ENCODE measurements at regions of chr15 and their contacts with region 1.

Region 1: DNA sequence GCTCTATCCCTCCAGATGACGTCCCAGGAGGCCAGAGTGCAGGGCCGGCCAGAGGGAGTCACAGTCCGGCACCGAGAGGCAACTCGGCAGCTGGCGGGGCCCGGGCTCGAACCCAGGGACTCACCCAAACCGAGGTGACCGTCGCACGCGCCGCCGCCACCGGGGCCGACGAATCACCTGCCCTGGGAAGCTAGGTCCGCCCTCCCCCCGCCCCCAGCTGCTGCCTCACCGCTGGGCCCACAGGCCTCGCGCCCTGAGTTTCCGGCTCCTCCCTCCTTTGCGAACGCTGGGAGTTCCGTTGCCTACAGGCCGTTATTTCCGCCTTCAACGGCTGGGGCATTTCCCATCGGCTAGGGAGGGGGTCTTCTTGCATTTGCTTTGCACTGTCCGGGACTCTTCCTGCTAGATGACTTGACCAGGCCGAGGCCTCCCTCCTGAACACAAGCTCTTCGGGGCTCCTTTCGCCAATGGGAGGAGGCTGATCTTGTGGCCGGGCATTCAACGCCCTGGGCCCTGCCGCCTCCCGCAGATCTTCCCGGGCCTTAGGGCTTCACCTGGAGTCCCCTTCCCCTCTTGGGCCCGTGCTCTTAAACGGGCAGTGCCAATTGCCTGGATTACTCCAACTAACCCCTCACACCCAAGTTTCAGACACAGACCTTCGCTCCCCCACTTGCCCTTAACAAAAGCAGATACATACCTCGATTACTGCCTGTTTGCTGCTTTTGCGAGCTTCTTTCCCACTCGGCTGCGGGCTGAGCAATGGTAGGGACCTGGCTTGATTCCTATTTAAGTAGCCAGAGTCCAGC is at the start of gene SNUPN:
- DNase-seq: peak; percentile 78
- ATAC-seq: peak; percentile 93
- H3K4me3 Mint-ChIP-seq: peak within 1 kb of the TSS; percentile 96
- H3K27ac Mint-ChIP-seq: peak within 1 kb of the TSS; percentile 98
- H3K4me1 Mint-ChIP-seq: peaks cover 19% of the 10 kb centered on the region
- H3K27me3 Mint-ChIP-seq: no peaks in the 10 kb centered on the region
- CTCF ChIP-seq: no peak
- total RNA-seq, gene SNUPN: 20.5 and 20.8 TPM in 2 replicates

Region 2: DNA sequence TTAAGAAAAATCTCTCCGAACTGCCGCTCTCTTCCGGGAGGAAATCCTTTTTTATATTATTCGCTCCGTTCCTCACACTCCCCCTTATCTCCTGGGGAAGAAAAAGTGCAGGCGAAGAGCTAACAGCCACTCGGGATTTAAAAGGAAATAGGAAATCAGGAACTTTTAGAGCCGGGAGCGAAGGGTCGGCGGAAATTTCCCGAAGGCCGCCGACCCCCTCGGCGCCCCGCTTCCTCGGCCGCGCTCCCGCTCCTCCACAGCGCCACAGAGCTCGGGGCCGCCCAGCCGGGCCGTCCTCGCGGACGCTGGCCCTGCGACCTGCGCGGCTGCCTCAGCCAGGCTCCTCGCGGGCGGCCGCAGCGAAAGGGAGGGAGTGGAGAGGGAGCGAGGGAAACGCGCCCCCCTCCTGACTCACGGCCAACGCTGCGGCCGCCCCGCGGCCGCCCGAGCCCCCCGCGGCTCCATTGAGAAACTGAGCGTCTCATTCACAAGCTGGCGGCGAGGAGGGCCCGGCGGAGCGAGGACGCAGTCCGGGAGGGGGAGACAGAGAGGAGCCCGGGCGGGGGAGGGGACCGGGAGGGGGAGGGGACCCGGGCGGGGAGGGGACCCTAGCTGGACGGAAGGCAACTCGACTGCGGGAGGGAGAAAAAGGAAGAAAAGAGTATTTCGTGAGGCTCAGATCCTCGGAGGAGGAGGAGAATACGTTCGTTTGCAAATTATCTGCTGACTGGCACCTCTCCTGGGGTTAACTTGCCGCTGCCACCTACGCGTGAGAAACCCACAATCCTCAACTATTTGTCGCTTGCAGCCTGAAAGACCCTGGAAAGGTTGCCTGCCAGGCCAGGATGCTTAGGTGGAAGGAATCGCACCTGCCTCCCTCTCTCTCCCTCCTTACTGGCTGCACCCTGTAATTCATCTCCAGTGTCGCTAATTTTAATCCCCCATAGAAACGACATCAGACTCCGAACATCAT is 46.5 kb before region 1 on chr15 and contains the start of gene PTPN9:
- CTCF ChIA-PET with region 1: no interaction called
- POLR2A ChIA-PET with region 1: interaction called, 10 read pairs
- intact Hi-C with region 1: loop called (anchors 1 kb)
- DNase-seq: peak; percentile 63
- ATAC-seq: peak; percentile 87
- H3K4me3 Mint-ChIP-seq: peak within 1 kb of the TSS; percentile 92
- H3K27ac Mint-ChIP-seq: peak within 1 kb of the TSS; percentile 82
- H3K4me1 Mint-ChIP-seq: peaks cover 19% of the 10 kb centered on the region
- H3K27me3 Mint-ChIP-seq: no peaks in the 10 kb centered on the region
- CTCF ChIP-seq: no peak
- total RNA-seq, gene PTPN9: 18.2 and 19.2 TPM in 2 replicates

Region 3: DNA sequence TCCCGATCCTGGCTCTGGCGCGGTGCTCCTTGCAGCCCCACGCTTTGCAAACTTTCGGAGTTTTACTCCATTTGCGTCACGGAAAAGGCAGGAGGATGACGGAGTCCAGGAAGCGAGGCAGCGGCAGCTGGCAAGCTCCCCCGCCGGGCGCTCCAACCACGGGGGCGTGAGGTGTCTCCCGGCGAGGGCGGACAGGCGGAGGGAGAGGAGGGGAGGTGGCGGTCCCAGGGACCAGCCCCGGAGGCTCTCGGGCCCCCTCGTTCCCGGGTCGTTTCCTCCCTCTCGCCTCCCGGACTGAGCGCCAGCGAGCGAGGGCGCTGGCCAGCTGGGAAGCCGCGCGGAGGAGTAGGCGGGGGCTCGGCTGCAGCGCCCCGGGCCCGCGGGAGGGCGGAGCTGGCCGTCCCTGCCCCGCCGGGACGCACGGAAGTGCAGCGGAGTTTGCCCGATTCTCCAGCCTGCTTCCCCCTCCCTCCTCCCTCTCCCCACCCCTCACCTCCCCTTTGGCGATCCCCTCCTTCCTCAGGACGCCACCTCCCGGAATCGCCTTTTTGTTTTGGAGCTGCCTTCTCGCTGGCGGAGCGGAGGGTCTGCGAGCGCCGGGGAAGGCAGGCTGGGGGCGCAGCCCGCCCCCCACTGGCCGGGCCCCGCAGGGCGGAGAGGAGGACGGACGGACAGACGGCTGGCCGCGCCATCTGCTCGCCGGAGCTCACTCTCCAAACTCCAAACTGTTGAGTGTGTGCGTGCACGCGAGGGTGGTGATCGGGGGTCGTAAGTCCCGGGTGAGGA is 21.8 kb after region 1 on chr15 and contains the start of gene SNX33:
- CTCF ChIA-PET with region 1: interaction called, 3 read pairs
- POLR2A ChIA-PET with region 1: interaction called, 164 read pairs
- intact Hi-C with region 1: no loop called
- DNase-seq: peak; percentile 46
- ATAC-seq: peak; percentile 70
- H3K4me3 Mint-ChIP-seq: peak within 1 kb of the TSS; percentile 85
- H3K27ac Mint-ChIP-seq: peak within 1 kb of the TSS; percentile 16
- H3K4me1 Mint-ChIP-seq: peaks cover 8% of the 10 kb centered on the region
- H3K27me3 Mint-ChIP-seq: peaks cover 18% of the 10 kb centered on the region
- CTCF ChIP-seq: no peak
- total RNA-seq, gene SNX33: 0.22 and 0.34 TPM in 2 replicates

Region 4: GRCh38 chr15:75738647-75739331 is 113.0 kb after region 1 on chr15:
- CTCF ChIA-PET with region 1: no interaction called
- POLR2A ChIA-PET with region 1: interaction called, 4 read pairs
- intact Hi-C with region 1: loop called (anchors 1 kb)
- DNase-seq: peak; percentile 95
- ATAC-seq: peak; percentile 98
- H3K4me3 Mint-ChIP-seq: peak overlapping the region; percentile 82
- H3K27ac Mint-ChIP-seq: peak overlapping the region; percentile 65
- H3K4me1 Mint-ChIP-seq: peaks cover 15% of the 10 kb centered on the region
- H3K27me3 Mint-ChIP-seq: peaks cover 7% of the 10 kb centered on the region
- CTCF ChIP-seq: no peak

Region 5: GRCh38 chr15:75790631-75791336 is 165.0 kb after region 1 on chr15:
- CTCF ChIA-PET with region 1: no interaction called
- POLR2A ChIA-PET with region 1: no interaction called
- intact Hi-C with region 1: no loop called
- DNase-seq: no peak
- ATAC-seq: no peak
- H3K4me3 Mint-ChIP-seq: no peak overlapping the region
- H3K27ac Mint-ChIP-seq: no peak overlapping the region
- H3K4me1 Mint-ChIP-seq: peaks cover 6% of the 10 kb centered on the region
- H3K27me3 Mint-ChIP-seq: peaks cover 34% of the 10 kb centered on the region
- CTCF ChIP-seq: no peak

Measured in activated B cell treated with CpG ODN at 0.5 μM for 24 hours (primary cell).